ENCODE measurements at regions of chr11 and their contacts with region 1.

Region 1: DNA sequence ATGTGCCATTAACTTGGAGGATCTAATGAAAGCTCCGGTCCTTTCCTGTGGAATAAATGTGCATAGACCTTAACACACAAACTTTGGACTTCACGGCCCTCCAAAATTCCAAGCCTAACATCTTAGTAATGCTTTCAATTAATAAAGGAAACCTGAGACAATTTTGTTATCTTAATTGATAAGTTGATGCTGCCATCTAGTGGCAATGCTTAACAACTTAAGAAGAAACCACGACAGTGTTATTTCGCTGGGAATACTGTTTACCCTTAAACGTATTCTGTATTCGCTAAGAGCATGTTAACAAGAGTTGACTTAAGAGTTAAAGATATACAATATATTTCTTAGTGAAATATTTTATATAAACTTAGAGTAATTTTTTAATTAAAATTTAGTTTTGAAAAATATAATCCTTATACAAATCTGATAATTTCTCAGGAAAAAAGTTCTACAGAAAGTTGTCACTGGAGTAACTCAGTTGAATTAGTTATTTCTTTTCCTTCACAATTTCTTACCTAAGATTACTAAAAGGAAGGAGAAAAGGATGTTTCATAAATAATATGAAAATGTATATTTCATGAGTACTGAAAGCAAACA is 35.0 kb upstream of the OR9G4 start:
- DNase-seq: peak in 1 of 3 donors; percentile 57
- ATAC-seq: peak; percentile 40
- H3K4me3 ChIP-seq: no peak overlapping the region
- H3K4me1 ChIP-seq: no peaks in the 10 kb centered on the region
- CTCF ChIP-seq: peak; percentile 16

Region 2: GRCh38 chr11:56214537-56214936 is 569.0 kb before region 1 on chr11:
- intact Hi-C with region 1: no loop called
- DNase-seq: no peak
- ATAC-seq: no peak
- H3K4me3 ChIP-seq: no peak overlapping the region
- H3K4me1 ChIP-seq: no peaks in the 10 kb centered on the region
- CTCF ChIP-seq: no peak

Region 3: GRCh38 chr11:56624661-56625110 is 158.9 kb before region 1 on chr11:
- intact Hi-C with region 1: loop called in 1 of 2 experiments (anchors 10 kb)
- DNase-seq: peak in 1 of 3 donors; percentile 59
- ATAC-seq: peak; percentile 91
- H3K4me3 ChIP-seq: no peak overlapping the region
- H3K4me1 ChIP-seq: no peaks in the 10 kb centered on the region
- CTCF ChIP-seq: no peak